ENCODE measurements at regions of chr19 and their contacts with region 1.

Region 1: DNA sequence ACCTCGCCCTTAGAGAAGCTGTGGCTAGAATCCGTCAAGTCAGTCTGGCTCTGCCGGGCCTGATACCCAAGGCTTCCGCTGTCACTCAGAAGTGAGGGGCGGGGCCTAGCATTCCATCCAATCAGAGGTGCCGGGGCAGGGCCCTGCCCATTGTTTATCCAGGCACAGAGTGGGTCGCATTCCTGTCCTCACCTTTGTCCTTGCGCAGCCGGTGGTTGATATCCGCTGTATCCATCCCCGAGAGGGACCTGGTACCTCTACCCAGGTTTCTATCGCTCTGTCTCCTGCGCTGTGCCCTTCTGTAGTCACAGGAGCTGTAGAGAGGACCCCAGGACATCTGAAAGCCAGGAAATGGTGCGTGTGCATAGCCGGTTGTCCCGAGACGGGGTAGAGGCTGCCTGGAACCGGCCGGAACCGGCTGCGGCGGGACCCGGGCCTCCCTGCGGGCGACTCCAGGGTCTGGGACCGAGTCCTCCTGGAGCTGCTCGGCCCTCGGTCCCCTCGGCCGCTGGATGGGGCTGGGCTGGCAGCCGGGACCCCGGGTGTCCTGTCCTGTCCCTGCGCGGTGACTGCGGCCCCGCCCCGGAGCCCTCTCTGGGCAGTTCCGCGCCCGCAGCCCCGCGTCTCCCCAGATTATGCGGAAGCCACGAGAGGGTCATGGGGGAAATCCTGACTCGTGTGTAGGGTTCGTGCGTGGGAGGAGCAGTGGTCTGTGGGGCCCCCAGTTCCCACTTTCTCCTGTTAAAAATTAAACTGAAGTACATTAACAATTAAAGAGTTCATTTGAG is at the start of gene ZNF763:
- DNase-seq: peak; percentile 97
- H3K4me3 ChIP-seq: peak within 1 kb of the TSS; percentile 66 to 90 (median 70)
- H3K27ac ChIP-seq: peak within 1 kb of the TSS; percentile 90 to 95 (median 93)
- H3K4me1 ChIP-seq: peaks cover 0 to 20% (median 14%) of the 10 kb centered on the region in 4 donors
- H3K27me3 ChIP-seq: no peaks in the 10 kb centered on the region
- CTCF ChIP-seq: no peak
- EP300 ChIP-seq: peak in 2 of 4 donors; percentile 29 to 42
- POLR2A ChIP-seq: peak; percentile 13 to 45
- total RNA-seq, gene ZNF763: 2.3 to 11.9 (median 3.3) TPM

Region 2: GRCh38 chr19:11924886-11925650 is 40.0 kb before region 1 on chr19 and contains the start of gene ZNF700:
- intact Hi-C with region 1: loop called (anchors 1 kb)
- DNase-seq: peak; percentile 97
- H3K4me3 ChIP-seq: peak within 1 kb of the TSS; percentile 64 to 96 (median 81)
- H3K27ac ChIP-seq: peak within 1 kb of the TSS; percentile 84 to 97 (median 94)
- H3K4me1 ChIP-seq: peaks cover 0 to 27% (median 20%) of the 10 kb centered on the region in 4 donors
- H3K27me3 ChIP-seq: no peaks in the 10 kb centered on the region
- CTCF ChIP-seq: no peak
- EP300 ChIP-seq: no peak
- POLR2A ChIP-seq: peak; percentile 36 to 87
- total RNA-seq, gene ZNF700: 13.7 to 19.7 (median 15.0) TPM

Region 3: GRCh38 chr19:11949201-11949600 is 15.9 kb before region 1 on chr19:
- intact Hi-C with region 1: no loop called
- DNase-seq: no peak
- H3K4me3 ChIP-seq: no peak overlapping the region
- H3K27ac ChIP-seq: no peak overlapping the region
- H3K4me1 ChIP-seq: no peaks in the 10 kb centered on the region
- H3K27me3 ChIP-seq: no peaks in the 10 kb centered on the region
- CTCF ChIP-seq: no peak
- EP300 ChIP-seq: no peak
- POLR2A ChIP-seq: no peak

Region 4: GRCh38 chr19:11987405-11988281 is 22.6 kb after region 1 on chr19:
- intact Hi-C with region 1: loop called (anchors 1 kb)
- DNase-seq: peak; percentile 98
- H3K4me3 ChIP-seq: peak overlapping the region; percentile 66 to 85 (median 76)
- H3K27ac ChIP-seq: peak overlapping the region; percentile 92 to 95 (median 94)
- H3K4me1 ChIP-seq: peaks cover 0 to 15% (median 3%) of the 10 kb centered on the region in 4 donors
- H3K27me3 ChIP-seq: no peaks in the 10 kb centered on the region
- CTCF ChIP-seq: no peak
- EP300 ChIP-seq: no peak
- POLR2A ChIP-seq: peak; percentile 91 to 94

Region 5: GRCh38 chr19:12035220-12036153 is 70.4 kb after region 1 on chr19 and contains the start of gene ZNF433:
- intact Hi-C with region 1: loop called (anchors 10 kb)
- DNase-seq: peak; percentile 96
- H3K4me3 ChIP-seq: peak within 1 kb of the TSS; percentile 73 to 95 (median 88)
- H3K27ac ChIP-seq: peak within 1 kb of the TSS; percentile 84 to 90 (median 88)
- H3K4me1 ChIP-seq: peaks cover 0 to 15% (median 14%) of the 10 kb centered on the region in 4 donors
- H3K27me3 ChIP-seq: no peaks in the 10 kb centered on the region
- CTCF ChIP-seq: no peak
- EP300 ChIP-seq: peak in 1 of 4 donors; percentile 9
- POLR2A ChIP-seq: peak; percentile 40 to 47
- total RNA-seq, gene ZNF433: 2.5 to 16.9 (median 4.4) TPM

Measured in sigmoid colon (tissue), 7 donors.